MCF 10A (cell line): ENCODE measurements at regions of chr2 and their contacts with region 1.

Region 1: DNA sequence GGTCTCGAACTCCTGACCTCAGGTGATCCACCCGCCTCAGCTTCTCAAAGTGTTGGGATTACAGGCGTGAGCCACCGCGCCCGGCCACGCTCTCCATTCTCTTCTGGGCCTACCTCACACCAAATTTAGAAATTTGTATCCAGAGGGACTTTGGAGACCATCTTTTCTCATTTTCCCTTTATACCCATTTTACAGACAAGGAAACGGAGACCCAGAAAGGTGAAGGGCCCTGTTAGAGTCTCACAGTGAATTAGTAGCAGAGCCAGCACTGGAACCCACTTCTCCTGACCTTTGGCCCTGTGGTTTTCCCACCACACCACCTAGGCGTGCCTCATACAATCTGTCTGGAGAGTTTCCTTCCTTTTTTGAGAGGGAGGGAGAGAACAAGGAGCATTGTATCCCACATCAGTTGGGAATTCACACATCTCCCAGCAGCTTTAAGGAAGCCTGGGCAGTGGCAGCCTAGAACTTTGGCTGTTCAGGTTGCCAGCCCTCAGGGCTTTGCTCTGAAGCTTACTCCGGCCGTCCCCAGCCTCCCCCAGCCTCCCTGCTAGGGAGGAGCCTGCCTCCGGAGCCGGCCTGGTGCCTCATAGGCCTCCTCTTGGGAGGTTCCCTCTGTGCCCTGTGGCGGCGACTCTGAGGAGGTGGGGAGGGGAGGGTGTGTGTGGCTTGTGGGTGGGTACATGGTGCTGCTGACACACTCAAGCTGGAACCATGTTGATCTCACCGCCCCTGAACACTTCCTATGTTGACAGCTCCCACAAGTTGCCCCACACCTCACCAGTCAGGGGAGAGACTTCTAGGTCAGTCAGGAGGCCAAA is 13.8 kb downstream of the FOSL2 start:
- DNase-seq: peak; percentile 75
- H3K4me3 Mint-ChIP-seq: no peak overlapping the region
- H3K27ac Mint-ChIP-seq: peak overlapping the region; percentile 85
- H3K4me1 Mint-ChIP-seq: peaks cover 40% of the 10 kb centered on the region
- H3K27me3 Mint-ChIP-seq: no peaks in the 10 kb centered on the region
- CTCF ChIP-seq: no peak

Region 2: DNA sequence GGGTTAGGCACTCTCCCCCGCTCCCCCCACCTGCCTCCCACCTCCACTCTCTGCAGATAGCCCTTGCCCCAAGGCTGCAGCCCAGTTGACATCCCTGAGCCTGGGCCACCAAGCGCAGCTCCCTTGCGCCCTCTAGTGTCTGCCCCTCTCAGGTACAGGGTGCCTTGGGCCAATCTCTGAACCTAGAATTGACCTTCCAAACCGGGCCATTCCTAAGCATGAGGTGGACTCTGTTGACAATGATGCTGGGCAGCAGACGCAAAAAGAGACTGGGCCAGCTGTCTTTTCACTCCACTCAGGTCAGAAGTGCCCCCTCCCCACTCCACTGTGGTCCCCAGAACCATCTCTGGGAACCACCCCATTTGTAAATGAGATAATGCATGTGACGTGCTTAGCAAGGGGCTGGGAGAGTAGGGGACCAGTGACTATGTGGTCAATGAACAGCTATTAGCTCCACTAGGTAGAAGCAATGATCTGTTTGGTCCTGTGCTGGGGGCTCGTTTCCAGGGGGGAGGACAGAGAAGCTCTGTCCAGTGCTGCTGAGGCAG is 46.1 kb after region 1 on chr2:
- CTCF ChIA-PET with region 1: interaction called, 5 read pairs
- POLR2A ChIA-PET with region 1: interaction called, 3 read pairs
- intact Hi-C with region 1: loop called (anchors 2 kb)
- DNase-seq: peak; percentile 68
- H3K4me3 Mint-ChIP-seq: no peak overlapping the region
- H3K27ac Mint-ChIP-seq: no peak overlapping the region
- H3K4me1 Mint-ChIP-seq: peaks cover 31% of the 10 kb centered on the region
- H3K27me3 Mint-ChIP-seq: no peaks in the 10 kb centered on the region
- CTCF ChIP-seq: peak; percentile 94

Region 3: GRCh38 chr2:28610583-28611201 is 204.2 kb after region 1 on chr2:
- CTCF ChIA-PET with region 1: no interaction called
- POLR2A ChIA-PET with region 1: no interaction called
- intact Hi-C with region 1: no loop called
- DNase-seq: peak; percentile 92
- H3K4me3 Mint-ChIP-seq: peak overlapping the region; percentile 24
- H3K27ac Mint-ChIP-seq: peak overlapping the region; percentile 95
- H3K4me1 Mint-ChIP-seq: peaks cover 34% of the 10 kb centered on the region
- H3K27me3 Mint-ChIP-seq: no peaks in the 10 kb centered on the region
- CTCF ChIP-seq: no peak

Region 4: DNA sequence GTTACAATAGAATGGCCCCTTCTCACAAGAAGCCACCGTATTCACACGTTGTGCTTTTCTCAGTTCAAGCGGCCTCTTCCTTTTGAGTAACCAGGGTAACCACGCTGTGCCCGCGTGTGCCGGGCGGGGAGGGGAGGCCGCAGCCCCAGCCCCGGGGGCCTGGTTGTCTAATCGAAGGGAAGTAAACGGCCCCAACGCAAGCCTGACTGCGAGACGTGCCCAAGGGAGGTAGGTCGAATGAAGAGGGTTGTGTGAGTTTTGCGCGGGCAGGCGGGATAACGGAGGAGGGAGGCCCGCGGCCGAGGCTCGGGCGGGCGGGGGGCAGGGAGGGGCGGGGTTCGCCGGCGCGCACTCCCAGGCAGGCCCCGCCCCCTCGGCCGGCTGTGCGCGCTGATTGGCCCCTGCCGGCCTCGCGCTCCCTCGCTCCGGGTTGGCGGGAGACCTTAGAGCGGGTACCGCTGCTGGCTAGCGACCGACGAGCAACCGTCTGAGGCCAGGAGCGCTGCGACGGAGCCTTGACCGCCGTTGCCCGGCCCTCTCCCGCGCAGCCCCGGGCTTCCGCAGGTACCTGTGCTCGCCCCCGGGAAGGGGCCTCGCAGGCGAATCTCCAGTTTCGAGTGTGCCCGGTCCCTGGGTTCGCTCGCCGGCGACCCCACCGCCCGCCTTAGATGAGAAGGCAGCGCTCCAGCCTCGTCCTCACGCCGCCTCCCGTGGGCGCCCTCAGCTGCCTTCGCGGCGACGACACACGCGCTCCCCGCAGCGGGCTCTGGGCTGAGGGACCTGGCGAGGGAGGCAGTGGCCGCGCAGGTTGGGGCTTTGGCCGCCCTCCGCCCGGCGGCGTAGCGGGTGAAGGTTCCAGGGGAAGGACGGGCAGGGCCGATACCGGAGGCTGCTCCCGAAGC is 404.1 kb after region 1 on chr2 and contains the start of gene SPDYA:
- CTCF ChIA-PET with region 1: no interaction called
- POLR2A ChIA-PET with region 1: no interaction called
- intact Hi-C with region 1: no loop called
- DNase-seq: no peak
- H3K4me3 Mint-ChIP-seq: no peak within 1 kb of the TSS
- H3K27ac Mint-ChIP-seq: no peak within 1 kb of the TSS
- H3K4me1 Mint-ChIP-seq: no peaks in the 10 kb centered on the region
- H3K27me3 Mint-ChIP-seq: no peaks in the 10 kb centered on the region
- CTCF ChIP-seq: no peak
- total RNA-seq, gene SPDYA: 2.6 and 2.8 TPM in 2 replicates

Region 5: GRCh38 chr2:29718287-29718686 is 1311.8 kb after region 1 on chr2:
- CTCF ChIA-PET with region 1: no interaction called
- POLR2A ChIA-PET with region 1: no interaction called
- intact Hi-C with region 1: no loop called
- DNase-seq: no peak
- H3K4me3 Mint-ChIP-seq: no peak overlapping the region
- H3K27ac Mint-ChIP-seq: no peak overlapping the region
- H3K4me1 Mint-ChIP-seq: no peaks in the 10 kb centered on the region
- H3K27me3 Mint-ChIP-seq: peaks cover 48% of the 10 kb centered on the region
- CTCF ChIP-seq: no peak